Mammary epithelial cell (primary cell): ENCODE measurements at regions of chr4 and their contacts with region 1.

Region 1: DNA sequence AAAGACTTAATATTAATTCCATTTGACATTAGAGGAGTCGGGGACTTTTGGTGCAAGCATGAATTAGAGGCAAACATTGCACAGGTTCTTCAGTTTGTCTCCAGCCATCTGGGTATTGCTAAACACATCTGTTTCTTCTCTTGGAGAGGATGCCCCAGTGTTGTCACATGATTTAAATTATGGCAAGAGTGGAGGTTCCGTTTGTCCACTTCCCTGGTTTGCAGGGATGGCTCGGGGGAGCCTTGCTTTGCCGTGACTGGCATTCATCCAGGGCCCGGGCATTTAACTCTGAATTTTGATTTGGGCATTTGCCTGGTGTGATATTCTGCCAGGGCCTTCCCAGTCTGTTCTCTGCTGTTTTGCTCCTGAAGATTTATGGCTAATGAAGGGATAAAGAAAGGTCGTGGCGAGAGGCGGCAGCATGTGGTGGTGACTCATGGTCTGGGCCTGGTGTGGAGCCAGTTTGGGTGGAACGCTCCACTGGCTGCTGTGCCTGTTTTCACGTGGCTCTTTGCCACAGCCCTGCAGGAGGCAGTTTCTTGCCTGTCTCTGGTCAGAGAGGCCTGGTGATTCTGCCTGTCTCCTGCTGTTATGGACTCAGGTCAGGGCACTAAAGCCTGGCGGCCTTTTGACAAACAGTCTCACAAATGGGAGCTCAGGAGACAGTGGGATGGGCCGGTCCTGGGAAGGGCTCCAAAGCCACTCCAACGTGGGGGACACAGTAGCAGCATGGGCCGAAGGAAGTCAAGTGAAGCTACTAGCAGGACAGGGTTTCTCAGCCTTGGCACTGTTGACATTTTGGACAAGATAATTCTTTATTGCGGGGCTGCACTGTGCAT is 99.4 kb upstream of the PGRMC2 start:
- DNase-seq: peak; percentile 83
- H3K4me3 ChIP-seq: no peak overlapping the region
- H3K27ac ChIP-seq: peak overlapping the region; percentile 51
- H3K4me1 ChIP-seq: peaks cover 37% of the 10 kb centered on the region
- H3K27me3 ChIP-seq: no peaks in the 10 kb centered on the region
- CTCF ChIP-seq: no peak

Region 2: DNA sequence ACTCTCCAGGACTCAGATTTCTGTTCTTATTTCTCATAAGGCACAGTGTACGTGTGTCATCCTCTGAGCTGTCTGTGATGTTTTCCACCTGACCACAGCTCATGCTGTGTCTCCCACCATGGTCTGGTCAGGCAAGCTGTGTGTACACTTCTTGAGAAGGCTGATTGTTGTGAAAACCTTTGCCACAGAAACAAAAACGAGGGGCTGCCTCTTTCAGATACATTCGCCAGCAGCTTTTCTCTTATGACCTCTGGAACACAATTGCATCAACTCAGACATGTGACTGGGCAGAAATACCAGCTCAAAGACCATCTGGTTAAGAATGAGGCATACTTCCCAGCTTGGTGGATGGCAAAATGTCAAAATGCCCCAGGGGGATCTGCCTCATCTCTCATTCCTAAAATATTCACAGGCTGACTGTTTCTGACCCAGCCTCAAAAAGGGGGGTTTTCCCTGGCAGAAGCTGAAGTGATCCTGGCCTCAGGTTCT is 145.5 kb before region 1 on chr4:
- CTCF ChIA-PET with region 1: no interaction called
- dilution Hi-C with region 1: no loop called
- in situ Hi-C with region 1: no loop called
- intact Hi-C with region 1: loop called (anchors 5 kb)
- DNase-seq: peak; percentile 95
- H3K4me3 ChIP-seq: no peak overlapping the region
- H3K27ac ChIP-seq: peak overlapping the region; percentile 61
- H3K4me1 ChIP-seq: peaks cover 22% of the 10 kb centered on the region
- H3K27me3 ChIP-seq: no peaks in the 10 kb centered on the region
- CTCF ChIP-seq: no peak

Region 3: DNA sequence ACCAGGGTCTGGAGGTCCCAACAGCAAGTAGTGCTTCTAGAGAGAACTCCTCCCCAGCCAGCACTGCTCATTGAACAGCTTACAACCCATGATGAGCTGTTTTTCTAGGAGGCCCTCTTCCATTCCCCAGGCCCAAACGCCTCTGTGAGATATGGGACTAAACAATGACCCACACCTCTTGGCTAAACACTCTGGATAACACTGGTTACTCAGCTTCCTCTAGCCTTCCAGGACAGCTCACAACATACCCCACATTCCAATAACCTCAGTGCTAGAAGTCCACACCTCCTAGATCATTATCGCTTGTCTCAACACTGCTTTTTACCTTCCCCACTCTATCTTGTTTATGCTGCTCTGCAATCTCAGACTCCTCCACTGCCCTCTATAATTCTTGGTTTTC is 64.0 kb before region 1 on chr4:
- CTCF ChIA-PET with region 1: no interaction called
- dilution Hi-C with region 1: no loop called
- in situ Hi-C with region 1: no loop called
- intact Hi-C with region 1: loop called (anchors 2 kb)
- DNase-seq: peak; percentile 85
- H3K4me3 ChIP-seq: no peak overlapping the region
- H3K27ac ChIP-seq: peak overlapping the region; percentile 65
- H3K4me1 ChIP-seq: peaks cover 33% of the 10 kb centered on the region
- H3K27me3 ChIP-seq: no peaks in the 10 kb centered on the region
- CTCF ChIP-seq: no peak

Region 4: DNA sequence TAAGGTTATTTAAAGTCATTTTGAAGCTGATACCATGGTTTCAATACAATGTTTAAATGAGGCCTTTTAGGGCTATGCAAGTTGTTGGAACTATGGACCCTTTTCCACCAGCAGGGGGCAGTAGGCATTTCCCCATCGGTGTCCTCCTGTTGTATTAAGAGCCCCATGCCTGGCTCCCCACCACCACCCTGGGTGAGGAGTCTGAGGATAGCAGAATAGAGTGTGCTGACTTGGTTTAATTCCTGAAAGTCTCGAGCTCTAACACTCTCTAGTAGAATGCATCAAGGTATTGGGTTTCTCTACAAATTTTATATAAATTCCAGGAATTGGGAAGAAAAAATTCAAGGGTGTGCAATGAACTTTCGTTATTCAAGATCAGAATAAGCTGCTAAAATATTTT is 187.7 kb after region 1 on chr4:
- CTCF ChIA-PET with region 1: no interaction called
- dilution Hi-C with region 1: no loop called
- in situ Hi-C with region 1: no loop called
- intact Hi-C with region 1: loop called (anchors 5 kb)
- DNase-seq: peak; percentile 47
- H3K4me3 ChIP-seq: no peak overlapping the region
- H3K27ac ChIP-seq: no peak overlapping the region
- H3K4me1 ChIP-seq: peaks cover 30% of the 10 kb centered on the region
- H3K27me3 ChIP-seq: no peaks in the 10 kb centered on the region
- CTCF ChIP-seq: peak; percentile 64 to 79